B cell (primary cell): ENCODE measurements at regions of chr2 and their contacts with region 1.

Region 1: DNA sequence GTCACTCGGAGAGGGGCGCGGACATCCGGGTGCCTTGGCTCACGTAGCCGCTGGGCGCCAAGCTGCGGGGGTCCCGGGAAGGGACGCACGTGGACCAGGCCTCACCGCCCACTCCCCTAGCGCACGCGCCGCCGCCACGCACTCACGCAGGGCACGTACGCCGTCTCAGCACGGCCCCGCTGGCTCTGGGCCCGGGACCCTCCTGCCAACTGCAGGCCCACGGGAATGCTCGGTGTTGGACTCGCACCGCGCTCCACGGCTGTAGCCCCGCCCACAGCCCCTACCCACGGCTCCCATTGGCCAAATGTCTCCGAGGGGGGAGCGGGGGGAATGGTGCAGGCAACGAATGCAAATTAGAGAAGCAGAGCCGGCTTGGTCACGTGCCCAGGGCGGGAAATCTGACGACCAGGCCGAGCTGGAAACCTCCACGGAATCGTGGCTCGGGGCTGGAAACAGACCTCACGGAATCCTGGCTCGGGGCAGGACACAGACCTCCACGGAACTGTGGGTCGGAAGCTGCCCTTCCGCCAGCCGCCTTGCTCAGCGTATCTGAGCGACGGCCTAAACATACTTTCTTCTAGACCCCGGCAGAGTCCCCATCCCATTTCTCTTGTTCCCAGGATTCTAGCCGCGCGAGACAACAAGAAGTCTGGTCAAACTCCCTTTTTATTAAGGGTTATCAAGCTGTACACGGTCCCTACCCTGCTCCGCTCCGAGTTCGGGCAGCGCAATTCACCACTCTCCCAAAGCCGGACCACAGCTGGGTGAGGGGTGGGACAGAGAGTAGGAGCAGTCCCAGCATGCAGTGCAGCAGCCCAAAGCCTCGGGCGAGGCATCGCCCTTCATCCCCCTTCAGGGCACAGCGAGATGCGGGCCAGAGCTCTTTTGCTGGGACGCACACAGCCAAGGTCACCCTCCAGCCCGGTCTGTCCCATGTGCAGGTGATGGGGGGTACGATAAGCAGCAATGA is at the start of gene ABCB6:
- DNase-seq: peak; percentile 92
- ATAC-seq: peak; percentile 95
- H3K4me3 ChIP-seq: peak within 1 kb of the TSS; percentile 51 to 74 (median 66)
- H3K4me3 Mint-ChIP-seq: peak within 1 kb of the TSS; percentile 87
- H3K27ac ChIP-seq: peak within 1 kb of the TSS; percentile 0 to 55
- H3K27ac Mint-ChIP-seq: peak within 1 kb of the TSS; percentile 86
- H3K4me1 ChIP-seq: peaks cover 17 to 21% of the 10 kb centered on the region in 2 donors
- H3K4me1 Mint-ChIP-seq: peaks cover 20% of the 10 kb centered on the region
- H3K27me3 ChIP-seq: no peaks in the 10 kb centered on the region
- H3K27me3 Mint-ChIP-seq: no peaks in the 10 kb centered on the region
- CTCF ChIP-seq: no peak
- total RNA-seq, gene ABCB6: 10.5 and 12.3 TPM in 2 replicates

Region 2: DNA sequence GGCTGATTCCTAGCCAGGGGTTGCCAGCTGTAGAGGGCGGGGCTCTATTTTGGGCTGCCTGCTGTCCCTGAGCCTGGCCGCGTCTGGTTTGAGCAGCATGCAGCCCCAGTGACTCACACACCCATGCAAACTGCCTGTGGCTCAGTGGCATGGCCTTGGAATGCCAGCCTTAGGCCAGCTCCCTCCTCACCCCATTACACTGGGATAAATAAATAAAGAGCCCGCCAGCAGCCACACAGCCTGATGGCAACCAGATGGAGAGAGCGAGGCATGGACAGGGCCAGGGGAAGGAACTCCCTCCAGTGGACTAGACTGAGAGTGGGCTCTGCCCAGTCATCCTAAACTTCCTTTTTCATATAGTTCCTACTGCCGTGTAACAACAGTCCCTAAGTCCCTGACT is 76.7 kb before region 1 on chr2:
- CTCF ChIA-PET with region 1: no interaction called
- POLR2A ChIA-PET with region 1: no interaction called
- intact Hi-C with region 1: no loop called
- DNase-seq: no peak
- ATAC-seq: no peak
- H3K4me3 ChIP-seq: no peak overlapping the region
- H3K4me3 Mint-ChIP-seq: no peak overlapping the region
- H3K27ac ChIP-seq: no peak overlapping the region
- H3K27ac Mint-ChIP-seq: no peak overlapping the region
- H3K4me1 ChIP-seq: no peaks in the 10 kb centered on the region
- H3K4me1 Mint-ChIP-seq: no peaks in the 10 kb centered on the region
- H3K27me3 ChIP-seq: no peaks in the 10 kb centered on the region
- H3K27me3 Mint-ChIP-seq: no peaks in the 10 kb centered on the region
- CTCF ChIP-seq: no peak

Region 3: DNA sequence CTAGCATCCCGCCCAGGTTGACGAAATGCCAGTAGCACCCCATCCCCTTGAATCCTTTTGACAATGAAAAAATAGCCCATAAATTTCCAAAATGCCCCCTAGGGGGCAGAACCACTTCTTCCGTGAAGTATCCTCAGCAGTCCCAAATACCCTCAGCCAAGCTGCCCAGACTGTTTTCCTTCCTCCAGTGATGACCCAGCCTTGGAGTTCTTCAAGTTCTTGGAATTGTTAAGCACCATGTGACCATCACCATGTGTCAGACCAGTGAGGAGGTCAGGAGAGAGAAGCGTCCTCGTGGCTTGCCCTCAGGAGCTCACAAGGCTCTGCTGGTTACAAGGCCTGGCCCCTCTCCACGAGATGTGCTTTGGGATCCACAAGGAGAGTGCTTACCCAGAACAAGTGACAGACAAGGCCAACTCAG is 47.8 kb before region 1 on chr2:
- CTCF ChIA-PET with region 1: interaction called, 19 read pairs
- POLR2A ChIA-PET with region 1: interaction called, 5 read pairs
- intact Hi-C with region 1: no loop called
- DNase-seq: peak; percentile 67
- ATAC-seq: peak; percentile 52
- H3K4me3 ChIP-seq: no peak overlapping the region
- H3K4me3 Mint-ChIP-seq: no peak overlapping the region
- H3K27ac ChIP-seq: peak overlapping the region in 1 of 2 donors; percentile 21
- H3K27ac Mint-ChIP-seq: peak overlapping the region; percentile 67
- H3K4me1 ChIP-seq: peaks cover 6 to 28% of the 10 kb centered on the region in 2 donors
- H3K4me1 Mint-ChIP-seq: peaks cover 25% of the 10 kb centered on the region
- H3K27me3 ChIP-seq: no peaks in the 10 kb centered on the region
- H3K27me3 Mint-ChIP-seq: no peaks in the 10 kb centered on the region
- CTCF ChIP-seq: peak; percentile 83

Region 4: GRCh38 chr2:219229305-219230058 is 10.5 kb after region 1 on chr2 and contains the starts of genes ANKZF1 and ATG9A:
- CTCF ChIA-PET with region 1: interaction called, 5 read pairs
- POLR2A ChIA-PET with region 1: interaction called, 9 read pairs
- intact Hi-C with region 1: loop called (anchors 1 kb)
- DNase-seq: peak; percentile 98
- ATAC-seq: peak; percentile 97
- H3K4me3 ChIP-seq: peak within 1 kb of the TSS; percentile 86 to 98 (median 92)
- H3K4me3 Mint-ChIP-seq: peak within 1 kb of the TSS; percentile 99
- H3K27ac ChIP-seq: peak within 1 kb of the TSS; percentile 74 to 87
- H3K27ac Mint-ChIP-seq: peak within 1 kb of the TSS; percentile 98
- H3K4me1 ChIP-seq: peaks cover 17 to 23% of the 10 kb centered on the region in 2 donors
- H3K4me1 Mint-ChIP-seq: peaks cover 38% of the 10 kb centered on the region
- H3K27me3 ChIP-seq: no peaks in the 10 kb centered on the region
- H3K27me3 Mint-ChIP-seq: no peaks in the 10 kb centered on the region
- CTCF ChIP-seq: no peak
- total RNA-seq, gene ANKZF1: 181 and 199 TPM in 2 replicates
- total RNA-seq, gene ATG9A: 59.4 and 65.5 TPM in 2 replicates

Region 5: DNA sequence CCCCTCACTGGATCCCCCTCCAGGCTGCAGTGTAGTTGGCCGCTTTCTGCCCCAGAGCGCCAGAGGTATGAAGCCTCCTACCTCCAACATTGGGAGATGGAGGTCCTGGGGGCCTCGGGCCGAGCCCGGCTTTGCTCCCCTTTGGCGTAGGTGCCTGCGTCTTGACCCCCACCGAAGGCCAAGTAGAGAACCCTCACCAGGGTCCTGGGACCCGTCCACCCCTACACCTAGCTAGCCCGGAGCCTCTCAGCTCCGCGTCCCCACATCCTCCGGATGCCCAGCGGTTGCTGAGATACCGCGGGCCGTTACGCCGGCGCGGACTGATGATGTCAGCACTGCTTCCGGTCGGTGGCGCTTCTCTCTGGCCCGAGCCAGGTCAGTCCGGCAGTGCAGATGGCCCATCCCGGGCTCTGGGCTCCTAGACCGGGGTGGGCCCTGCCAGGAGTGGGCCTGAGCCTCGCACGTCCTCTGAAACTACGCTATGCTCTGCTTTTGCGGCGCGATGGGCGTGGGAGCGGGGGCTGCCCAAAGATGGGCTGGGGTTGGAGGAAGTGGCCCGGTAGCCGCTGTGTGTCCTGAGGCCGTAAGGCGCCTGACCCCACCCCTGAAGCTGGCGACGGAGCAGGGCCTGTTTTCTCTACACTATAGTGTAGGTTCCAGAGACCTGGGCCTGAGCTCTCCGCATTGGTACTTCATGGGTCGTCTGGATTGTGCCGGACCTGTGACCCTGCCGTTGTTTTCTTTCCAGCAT is 26.3 kb after region 1 on chr2 and contains the starts of genes GLB1L and STK16:
- CTCF ChIA-PET with region 1: interaction called, 6 read pairs
- POLR2A ChIA-PET with region 1: interaction called, 12 read pairs
- intact Hi-C with region 1: no loop called
- DNase-seq: peak; percentile 93
- ATAC-seq: peak; percentile 67
- H3K4me3 ChIP-seq: peak within 1 kb of the TSS; percentile 50 to 98 (median 94)
- H3K4me3 Mint-ChIP-seq: peak within 1 kb of the TSS; percentile 92
- H3K27ac ChIP-seq: peak within 1 kb of the TSS; percentile 87 to 92
- H3K27ac Mint-ChIP-seq: peak within 1 kb of the TSS; percentile 96
- H3K4me1 ChIP-seq: peaks cover 52 to 58% of the 10 kb centered on the region in 2 donors
- H3K4me1 Mint-ChIP-seq: peaks cover 62% of the 10 kb centered on the region
- H3K27me3 ChIP-seq: no peaks in the 10 kb centered on the region
- H3K27me3 Mint-ChIP-seq: no peaks in the 10 kb centered on the region
- CTCF ChIP-seq: no peak
- total RNA-seq, gene GLB1L: 3.9 and 4.1 TPM in 2 replicates
- total RNA-seq, gene STK16: 29.0 and 29.3 TPM in 2 replicates

Region 6: DNA sequence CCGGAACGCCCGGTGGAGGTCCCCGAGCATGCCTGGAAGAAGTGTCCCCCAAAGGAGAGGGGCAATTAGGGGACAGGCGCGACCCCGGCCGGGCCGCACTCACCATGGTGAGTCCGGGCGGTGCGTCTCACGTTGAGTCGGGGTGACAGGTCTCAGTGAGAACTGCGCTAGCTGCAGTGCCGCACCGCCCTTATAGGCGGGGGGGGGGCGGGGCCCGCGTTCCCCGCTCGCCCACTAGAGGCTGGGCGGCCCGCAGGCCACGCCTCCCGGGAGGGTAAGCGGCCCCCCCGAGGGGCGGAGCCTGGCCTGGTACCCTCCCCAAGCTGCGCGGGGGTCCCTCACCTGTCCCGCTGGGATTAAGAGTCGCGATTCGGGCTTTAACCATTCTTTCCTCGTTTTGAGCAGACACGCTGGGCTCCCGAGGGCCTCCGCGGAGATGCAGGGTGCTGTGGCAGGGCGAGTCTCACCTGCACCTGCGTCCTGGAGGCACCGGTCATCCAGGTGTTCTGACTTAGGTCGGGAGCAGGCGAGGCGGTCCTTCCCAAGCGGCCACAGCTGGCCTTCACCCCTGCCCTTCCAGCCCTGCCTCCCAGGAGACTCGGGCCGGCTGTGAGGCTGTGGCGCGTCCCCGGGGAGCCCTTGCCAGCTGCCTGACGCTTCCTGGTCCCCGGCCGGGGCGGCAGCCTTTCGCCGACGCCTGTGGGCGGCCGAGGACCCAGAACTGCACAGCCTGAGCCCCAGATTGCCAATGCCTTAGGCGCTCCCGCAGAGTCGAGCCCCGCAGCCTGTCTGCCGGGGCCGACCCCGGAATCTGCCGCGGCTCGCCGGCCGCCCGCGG is 35.0 kb after region 1 on chr2 and contains the start of gene TUBA4A:
- CTCF ChIA-PET with region 1: interaction called, 6 read pairs
- POLR2A ChIA-PET with region 1: interaction called, 30 read pairs
- intact Hi-C with region 1: no loop called
- DNase-seq: peak; percentile 93
- ATAC-seq: peak; percentile 72
- H3K4me3 ChIP-seq: peak within 1 kb of the TSS; percentile 83 to 97 (median 90)
- H3K4me3 Mint-ChIP-seq: peak within 1 kb of the TSS; percentile 87
- H3K27ac ChIP-seq: peak within 1 kb of the TSS; percentile 93 to 94
- H3K27ac Mint-ChIP-seq: peak within 1 kb of the TSS; percentile 96
- H3K4me1 ChIP-seq: peaks cover 34 to 44% of the 10 kb centered on the region in 2 donors
- H3K4me1 Mint-ChIP-seq: peaks cover 49% of the 10 kb centered on the region
- H3K27me3 ChIP-seq: no peaks in the 10 kb centered on the region
- H3K27me3 Mint-ChIP-seq: no peaks in the 10 kb centered on the region
- CTCF ChIP-seq: no peak
- total RNA-seq, gene TUBA4A: 196 and 213 TPM in 2 replicates

Region 7: DNA sequence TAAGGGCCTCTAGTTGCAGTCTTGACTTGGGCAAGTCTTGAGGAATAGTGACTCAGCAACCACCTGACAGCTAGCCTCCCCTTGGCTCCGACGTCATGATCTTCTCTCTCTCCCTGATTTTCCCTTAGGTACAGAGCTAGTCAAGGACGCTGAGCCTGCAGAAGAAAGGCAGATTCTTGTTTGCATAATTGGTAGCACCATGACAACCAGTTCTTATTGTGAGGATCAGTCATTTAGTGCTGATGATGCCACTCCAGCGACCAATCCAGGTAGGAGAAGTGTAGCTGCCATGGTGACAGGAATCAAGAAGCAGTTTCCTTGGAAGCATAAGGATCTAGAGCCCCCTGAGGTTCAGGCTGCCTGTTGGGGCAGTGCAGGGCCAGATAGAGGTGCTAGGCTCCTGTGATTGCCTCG is 116.4 kb after region 1 on chr2:
- CTCF ChIA-PET with region 1: no interaction called
- POLR2A ChIA-PET with region 1: no interaction called
- intact Hi-C with region 1: no loop called
- DNase-seq: no peak
- ATAC-seq: no peak
- H3K4me3 ChIP-seq: no peak overlapping the region
- H3K4me3 Mint-ChIP-seq: no peak overlapping the region
- H3K27ac ChIP-seq: no peak overlapping the region
- H3K27ac Mint-ChIP-seq: no peak overlapping the region
- H3K4me1 ChIP-seq: no peaks in the 10 kb centered on the region
- H3K4me1 Mint-ChIP-seq: no peaks in the 10 kb centered on the region
- H3K27me3 ChIP-seq: peaks cover 0 to 51% (median 20%) of the 10 kb centered on the region in 4 experiments
- H3K27me3 Mint-ChIP-seq: peaks cover 71% of the 10 kb centered on the region
- CTCF ChIP-seq: no peak